Tibial artery (tissue), 4 donors: ENCODE measurements at regions of chr22 and their contacts with region 1.

Region 1: GRCh38 chr22:21712894-21713712 is 22.5 kb downstream of the YPEL1 start:
- DNase-seq: peak; percentile 71 to 80
- H3K4me3 ChIP-seq: no peak overlapping the region
- H3K27ac ChIP-seq: peak overlapping the region in 1 of 2 donors; percentile 22
- H3K4me1 ChIP-seq: peaks cover 0 to 4% (median 2%) of the 10 kb centered on the region in 4 donors
- H3K27me3 ChIP-seq: no peaks in the 10 kb centered on the region
- CTCF ChIP-seq: peak; percentile 78 to 91

Region 2: DNA sequence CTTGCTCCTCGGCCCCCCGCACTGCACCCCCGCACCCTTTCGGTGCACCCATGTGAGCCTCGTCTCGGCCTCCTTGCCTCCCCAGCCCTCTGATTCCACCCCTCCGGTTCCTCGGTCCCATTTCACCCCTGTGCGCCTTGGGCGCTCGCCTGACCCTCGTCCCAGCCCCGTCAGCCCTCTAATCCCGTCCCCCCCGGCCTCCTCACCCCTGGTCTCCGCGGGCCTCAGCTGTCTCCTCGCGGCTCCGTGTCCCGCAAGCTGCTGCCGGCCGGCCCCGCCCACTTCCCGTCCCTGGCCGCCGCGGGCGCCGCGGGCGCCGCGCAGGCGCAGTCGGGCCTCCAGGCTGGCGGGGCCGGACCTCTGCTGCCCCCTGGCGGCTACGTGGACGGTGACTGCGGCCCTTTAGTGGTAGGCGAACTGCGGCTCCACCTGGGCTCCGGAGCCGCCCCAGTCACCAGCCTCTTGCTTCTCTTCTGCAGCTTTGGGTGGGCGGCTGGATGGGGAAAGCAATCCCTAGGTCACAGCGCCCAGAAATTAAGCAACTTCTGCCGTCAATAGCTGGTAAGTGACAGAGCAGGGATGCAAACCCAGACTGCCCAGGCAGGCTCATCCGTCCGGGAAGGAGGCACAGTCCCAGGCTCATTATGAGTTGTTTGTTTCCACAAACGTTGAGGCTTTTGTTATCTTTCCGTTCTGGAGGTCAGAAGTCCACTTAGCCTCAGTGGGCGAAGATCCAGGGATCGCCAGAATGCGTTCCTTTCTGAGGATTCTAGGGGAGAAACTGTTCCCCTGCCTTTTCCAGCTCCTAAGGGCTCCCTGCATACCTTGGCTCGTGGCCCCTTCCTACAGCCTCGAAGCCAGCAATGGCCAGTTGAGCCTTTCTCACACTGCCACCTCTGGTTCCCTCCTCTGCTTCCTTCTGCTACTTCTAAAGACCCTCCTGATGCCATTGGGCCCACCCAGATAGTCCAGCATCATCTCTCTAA is 239.8 kb after region 1 on chr22 and contains the start of gene PPM1F:
- intact Hi-C with region 1: loop called (anchors 5 kb)
- DNase-seq: peak; percentile 80 to 91
- H3K4me3 ChIP-seq: peak within 1 kb of the TSS; percentile 62 to 81
- H3K27ac ChIP-seq: peak within 1 kb of the TSS; percentile 59 to 66
- H3K4me1 ChIP-seq: peaks cover 0 to 27% (median 9%) of the 10 kb centered on the region in 4 donors
- H3K27me3 ChIP-seq: no peaks in the 10 kb centered on the region
- CTCF ChIP-seq: peak; percentile 89 to 98